Activated T-helper 2 cell treated with anti-CD3 and anti-CD28 coated beads, Interferon-gamma antibody, Interleukin-2, Interleukin-4, amounts not matched to agents 10 μg/mL and 5 μg/mL and 100 μg/mL, durations not matched to agents 14 hours and 24 hours and 36 hours (primary cell): ENCODE measurements at regions of chr7 and their contacts with region 1.

Region 1: GRCh38 chr7:140249036-140249806 is 72.4 kb upstream of the KDM7A start:
- DNase-seq: no peak
- H3K4me3 Mint-ChIP-seq: no peak overlapping the region
- H3K27ac Mint-ChIP-seq: no peak overlapping the region
- H3K4me1 Mint-ChIP-seq: peaks cover 25% of the 10 kb centered on the region
- H3K27me3 Mint-ChIP-seq: no peaks in the 10 kb centered on the region

Region 2: GRCh38 chr7:140209866-140210609 is 39.2 kb before region 1 on chr7:
- intact Hi-C with region 1: loop called (anchors 1 kb)
- DNase-seq: peak; percentile 62
- H3K4me3 Mint-ChIP-seq: peak overlapping the region; percentile 49
- H3K27ac Mint-ChIP-seq: peak overlapping the region; percentile 70
- H3K4me1 Mint-ChIP-seq: peaks cover 61% of the 10 kb centered on the region
- H3K27me3 Mint-ChIP-seq: peaks cover 3% of the 10 kb centered on the region

Region 3: DNA sequence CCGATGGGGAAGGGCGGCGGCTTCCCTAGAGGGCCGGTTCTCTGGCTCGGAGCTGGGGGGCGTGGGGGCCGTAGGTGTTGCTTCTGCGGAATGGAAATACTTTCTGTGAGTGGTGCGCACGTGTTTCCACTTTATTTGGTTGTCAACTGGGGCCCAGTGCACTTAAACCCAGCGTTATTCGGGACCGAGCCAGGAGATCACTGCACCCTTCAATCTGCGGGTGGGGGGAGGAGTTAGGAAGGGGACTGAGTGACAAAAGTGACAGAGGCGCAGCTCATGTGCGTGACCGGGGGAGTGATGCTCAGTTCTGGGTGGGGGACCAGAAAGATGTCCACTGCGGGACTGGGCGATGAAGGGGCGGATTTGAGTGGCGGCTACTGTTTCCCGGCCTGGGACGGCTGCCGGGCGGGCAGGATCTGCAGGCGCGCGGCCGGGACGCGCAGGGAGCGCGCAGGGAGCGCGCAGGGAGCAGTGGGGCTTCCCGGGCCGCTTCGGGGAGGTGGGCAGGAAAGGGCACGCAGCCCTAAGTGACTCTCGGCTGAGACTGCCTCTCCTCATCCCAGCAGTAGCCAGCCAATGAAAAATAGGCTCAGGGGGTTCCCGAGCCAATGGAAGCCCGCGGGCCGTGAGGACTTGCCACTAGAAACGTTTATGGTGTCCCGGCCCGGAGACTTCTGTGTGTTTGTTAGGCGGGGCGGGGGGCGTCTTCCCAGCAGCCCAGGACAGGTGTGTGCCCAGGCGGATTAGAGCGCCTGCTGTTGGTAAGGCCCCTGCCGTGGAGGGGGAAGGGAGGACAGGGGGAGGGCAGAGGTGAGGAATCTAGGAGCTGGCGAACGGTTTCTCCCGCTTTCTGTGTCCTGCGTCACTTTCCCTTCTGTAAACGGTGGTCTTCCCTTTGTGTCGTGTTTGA is 18.1 kb before region 1 on chr7:
- intact Hi-C with region 1: loop called (anchors 1 kb)
- DNase-seq: peak; percentile 45
- H3K4me3 Mint-ChIP-seq: peak overlapping the region; percentile 86
- H3K27ac Mint-ChIP-seq: peak overlapping the region; percentile 92
- H3K4me1 Mint-ChIP-seq: peaks cover 27% of the 10 kb centered on the region
- H3K27me3 Mint-ChIP-seq: no peaks in the 10 kb centered on the region

Region 4: GRCh38 chr7:140269004-140269638 is 19.9 kb after region 1 on chr7:
- intact Hi-C with region 1: loop called (anchors 2 kb)
- DNase-seq: no peak
- H3K4me3 Mint-ChIP-seq: no peak overlapping the region
- H3K27ac Mint-ChIP-seq: no peak overlapping the region
- H3K4me1 Mint-ChIP-seq: peaks cover 22% of the 10 kb centered on the region
- H3K27me3 Mint-ChIP-seq: no peaks in the 10 kb centered on the region

Region 5: GRCh38 chr7:140304191-140304799 is 55.1 kb after region 1 on chr7:
- intact Hi-C with region 1: loop called (anchors 5 kb)
- DNase-seq: peak; percentile 35
- H3K4me3 Mint-ChIP-seq: no peak overlapping the region
- H3K27ac Mint-ChIP-seq: peak overlapping the region; percentile 82
- H3K4me1 Mint-ChIP-seq: peaks cover 7% of the 10 kb centered on the region
- H3K27me3 Mint-ChIP-seq: no peaks in the 10 kb centered on the region

Region 6: GRCh38 chr7:140375892-140376730 is 126.9 kb after region 1 on chr7:
- intact Hi-C with region 1: loop called (anchors 1 kb)
- DNase-seq: peak; percentile 26
- H3K4me3 Mint-ChIP-seq: peak overlapping the region; percentile 65
- H3K27ac Mint-ChIP-seq: peak overlapping the region; percentile 97
- H3K4me1 Mint-ChIP-seq: peaks cover 51% of the 10 kb centered on the region
- H3K27me3 Mint-ChIP-seq: no peaks in the 10 kb centered on the region

Region 7: DNA sequence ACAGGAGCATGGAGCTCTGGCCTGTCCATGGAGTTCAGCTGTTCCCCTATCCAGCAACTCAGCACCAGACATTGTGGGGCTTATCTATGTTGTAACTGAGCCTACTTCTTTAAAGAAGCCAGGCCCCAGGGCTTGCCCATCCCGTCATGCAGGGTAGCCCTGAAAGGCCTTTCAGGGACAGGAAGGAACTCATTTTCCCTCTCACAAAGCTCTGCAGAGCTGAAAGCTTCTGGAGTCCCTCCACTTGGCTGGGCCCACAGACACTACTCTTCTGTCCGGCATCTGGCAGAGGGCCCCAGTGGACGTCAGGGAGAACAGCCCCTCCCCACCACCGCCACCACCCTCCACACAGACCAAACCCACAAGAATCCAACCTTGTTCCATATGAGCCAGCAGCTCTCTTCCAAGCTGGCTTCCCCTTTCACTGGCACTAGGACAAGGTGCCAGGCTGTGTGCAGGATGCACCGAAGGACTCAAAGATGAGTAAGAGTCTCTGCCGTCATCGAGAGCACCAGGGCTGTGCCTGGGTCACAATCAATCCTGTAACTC is 358.3 kb after region 1 on chr7:
- intact Hi-C with region 1: no loop called
- DNase-seq: no peak
- H3K4me3 Mint-ChIP-seq: no peak overlapping the region
- H3K27ac Mint-ChIP-seq: no peak overlapping the region
- H3K4me1 Mint-ChIP-seq: no peaks in the 10 kb centered on the region
- H3K27me3 Mint-ChIP-seq: peaks cover 3% of the 10 kb centered on the region

Region 8: GRCh38 chr7:141558544-141559183 is 1309.4 kb after region 1 on chr7:
- intact Hi-C with region 1: loop called (anchors 5 kb)
- DNase-seq: peak; percentile 21
- H3K4me3 Mint-ChIP-seq: peak overlapping the region; percentile 35
- H3K27ac Mint-ChIP-seq: peak overlapping the region; percentile 96
- H3K4me1 Mint-ChIP-seq: peaks cover 66% of the 10 kb centered on the region
- H3K27me3 Mint-ChIP-seq: no peaks in the 10 kb centered on the region